ENCODE measurements at regions of chr11 and their contacts with region 1.

Region 1: DNA sequence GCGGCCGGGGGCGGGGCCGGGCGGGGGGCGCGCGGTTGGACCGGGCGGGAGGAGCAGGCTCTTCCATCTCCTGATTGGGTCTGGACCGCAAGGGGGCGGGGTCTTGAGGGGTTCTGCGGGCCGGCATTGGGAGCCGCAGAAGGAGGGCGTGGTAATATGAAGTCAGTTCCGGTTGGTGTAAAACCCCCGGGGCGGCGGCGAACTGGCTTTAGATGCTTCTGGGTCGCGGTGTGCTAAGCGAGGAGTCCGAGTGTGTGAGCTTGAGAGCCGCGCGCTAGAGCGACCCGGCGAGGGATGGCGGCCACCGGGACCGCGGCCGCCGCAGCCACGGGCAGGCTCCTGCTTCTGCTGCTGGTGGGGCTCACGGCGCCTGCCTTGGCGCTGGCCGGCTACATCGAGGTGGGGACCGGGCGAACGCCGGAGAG is at the start of gene APLP2:
- DNase-seq: peak; percentile 100
- H3K4me3 ChIP-seq: peak within 1 kb of the TSS; percentile 89 to 96
- H3K27ac ChIP-seq: peak within 1 kb of the TSS; percentile 93 to 94
- H3K4me1 ChIP-seq: peaks cover 0 to 27% (median 14%) of the 10 kb centered on the region in 4 donors
- H3K27me3 ChIP-seq: no peaks in the 10 kb centered on the region
- CTCF ChIP-seq: peak in 1 of 2 experiments; percentile 13

Region 2: GRCh38 chr11:129895126-129896041 is 174.3 kb before region 1 on chr11 and contains the start of gene NFRKB:
- intact Hi-C with region 1: loop called (anchors 10 kb)
- DNase-seq: peak; percentile 74 to 90
- H3K4me3 ChIP-seq: peak within 1 kb of the TSS; percentile 72 to 86
- H3K27ac ChIP-seq: peak within 1 kb of the TSS; percentile 76 to 81
- H3K4me1 ChIP-seq: peaks cover 3 to 13% (median 7%) of the 10 kb centered on the region in 4 donors
- H3K27me3 ChIP-seq: no peaks in the 10 kb centered on the region
- CTCF ChIP-seq: no peak

Region 3: DNA sequence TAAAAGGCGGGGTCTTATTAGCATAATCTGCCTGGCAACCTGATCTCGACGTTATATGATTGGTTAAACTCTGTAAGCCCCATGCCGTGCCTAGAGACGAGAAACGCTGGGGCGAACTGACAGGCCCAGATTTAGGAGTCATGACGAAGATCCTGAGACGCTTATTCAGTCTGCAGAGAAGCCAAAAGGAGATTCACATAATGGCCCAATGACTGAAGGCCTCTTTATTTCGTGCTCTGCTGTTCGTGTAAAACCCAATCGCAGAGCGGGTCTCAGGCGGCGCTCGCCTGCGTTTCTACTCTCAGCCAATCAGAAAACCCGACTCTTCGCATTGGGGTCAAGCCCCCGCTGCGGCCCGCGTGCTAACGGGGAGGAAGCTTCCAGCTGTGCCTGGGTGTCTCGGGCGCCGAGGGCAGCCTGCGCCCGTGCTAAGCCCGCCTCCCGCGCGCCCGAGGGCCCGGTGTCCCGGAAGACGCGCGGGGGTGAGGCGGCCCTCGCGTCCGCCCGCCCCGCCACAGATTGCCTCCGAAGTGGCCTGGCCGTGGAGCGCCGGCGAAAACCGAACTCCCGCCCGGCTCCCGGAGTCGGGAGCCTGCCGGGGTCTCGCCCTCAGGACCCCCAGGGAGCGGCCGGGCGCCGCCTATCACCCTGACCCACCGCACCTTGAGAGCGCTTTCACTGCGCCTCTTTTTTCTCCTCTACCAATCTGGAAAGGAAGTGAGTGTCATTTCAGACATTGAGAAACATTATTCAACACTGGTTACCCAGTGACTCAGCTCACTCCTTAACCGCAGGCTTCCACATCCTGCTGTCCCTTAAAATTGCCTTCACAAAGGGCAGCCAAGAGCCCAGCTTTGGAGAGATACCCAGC is 66.6 kb before region 1 on chr11:
- intact Hi-C with region 1: loop called (anchors 2 kb)
- DNase-seq: peak; percentile 93 to 98
- H3K4me3 ChIP-seq: peak overlapping the region; percentile 91 to 92
- H3K27ac ChIP-seq: peak overlapping the region; percentile 98 to 100
- H3K4me1 ChIP-seq: peaks cover 0 to 24% (median 18%) of the 10 kb centered on the region in 4 donors
- H3K27me3 ChIP-seq: no peaks in the 10 kb centered on the region
- CTCF ChIP-seq: peak in 1 of 2 experiments; percentile 5

Region 4: GRCh38 chr11:130124096-130124495 is 54.4 kb after region 1 on chr11:
- intact Hi-C with region 1: loop called (anchors 5 kb)
- DNase-seq: peak; percentile 87 to 90
- H3K4me3 ChIP-seq: no peak overlapping the region
- H3K27ac ChIP-seq: peak overlapping the region; percentile 56 to 71
- H3K4me1 ChIP-seq: peaks cover 0 to 38% (median 15%) of the 10 kb centered on the region in 4 donors
- H3K27me3 ChIP-seq: no peaks in the 10 kb centered on the region
- CTCF ChIP-seq: no peak

Measured in tibial artery (tissue), 4 donors.